ENCODE measurements at regions of chr9 and their contacts with region 1.

Region 1: DNA sequence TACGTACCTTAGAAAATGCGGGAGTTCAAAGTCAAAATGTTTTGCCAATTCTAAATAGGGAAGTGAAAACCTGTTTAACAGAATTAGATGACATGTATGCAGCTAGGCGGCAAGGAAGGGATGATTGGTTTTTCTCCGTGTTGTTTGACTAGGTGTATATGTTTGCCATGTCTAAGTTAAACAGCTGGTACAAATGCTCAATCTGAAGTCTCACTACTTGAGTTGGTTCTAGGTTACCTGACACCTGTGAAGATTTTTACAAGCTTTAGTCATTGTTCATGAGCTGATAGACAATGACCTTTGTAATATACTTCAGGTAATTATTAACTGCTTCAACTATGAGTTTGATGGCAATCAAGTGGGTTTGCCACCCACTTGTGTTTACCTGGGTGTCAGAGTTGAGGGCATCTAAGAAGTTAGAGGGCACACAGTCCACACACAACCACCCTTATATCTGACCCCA is 74.3 kb downstream of the SLC44A1 start:
- DNase-seq: peak; percentile 38
- H3K4me3 ChIP-seq: peak overlapping the region in 1 of 4 donors; percentile 5
- H3K27ac ChIP-seq: peak overlapping the region; percentile 83 to 87 (median 86)
- H3K4me1 ChIP-seq: peaks cover 2 to 60% (median 18%) of the 10 kb centered on the region in 4 donors
- H3K27me3 ChIP-seq: no peaks in the 10 kb centered on the region
- CTCF ChIP-seq: no peak
- EP300 ChIP-seq: no peak
- POLR2A ChIP-seq: peak; percentile 10

Region 2: DNA sequence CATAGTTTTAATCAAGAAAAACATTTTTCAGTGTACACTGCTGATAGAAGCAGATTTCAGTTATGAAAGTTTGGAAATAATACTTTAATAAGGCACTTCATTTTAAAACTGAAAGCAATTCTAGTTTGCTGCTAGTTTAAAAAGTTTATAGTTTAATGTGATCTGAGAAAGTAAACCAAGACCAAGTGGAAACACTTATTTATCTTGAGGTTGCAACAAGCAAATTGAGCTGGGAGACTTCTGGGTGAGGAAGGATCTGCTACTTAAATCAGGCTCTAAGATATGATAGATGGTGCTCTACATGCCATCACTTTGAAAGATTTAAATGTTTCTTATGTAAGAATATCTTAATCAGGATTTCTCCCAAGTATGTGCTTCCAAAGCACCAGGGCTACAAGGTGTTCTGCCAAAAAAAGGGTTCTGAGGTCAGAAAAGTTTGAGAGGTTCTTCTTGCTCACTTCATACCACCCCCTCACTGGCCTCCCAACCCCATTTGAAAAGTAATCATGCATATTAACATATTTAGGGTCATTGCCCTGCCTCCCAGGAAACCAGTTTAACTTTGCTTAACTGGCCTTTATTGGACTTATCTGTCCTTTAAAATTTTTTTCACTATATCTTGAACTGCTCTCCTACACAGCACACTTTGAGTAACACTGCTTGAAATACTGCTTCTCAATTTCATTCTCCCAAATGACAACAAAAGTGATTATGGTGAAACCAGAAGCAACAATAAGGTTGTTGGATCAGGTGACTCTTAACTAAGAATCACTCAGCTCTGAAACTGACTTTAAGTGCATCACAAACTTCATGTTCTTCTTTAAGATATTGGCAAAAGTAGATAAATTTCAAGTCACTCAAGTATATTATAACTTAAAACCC is 58.8 kb before region 1 on chr9:
- in situ Hi-C with region 1: loop called in 1 of 4 experiments (anchors 5 kb)
- intact Hi-C with region 1: no loop called
- DNase-seq: no peak
- H3K4me3 ChIP-seq: no peak overlapping the region
- H3K27ac ChIP-seq: peak overlapping the region; percentile 67 to 84 (median 75)
- H3K4me1 ChIP-seq: peaks cover 19 to 76% (median 55%) of the 10 kb centered on the region in 4 donors
- H3K27me3 ChIP-seq: no peaks in the 10 kb centered on the region
- CTCF ChIP-seq: no peak
- EP300 ChIP-seq: no peak
- POLR2A ChIP-seq: no peak

Region 3: DNA sequence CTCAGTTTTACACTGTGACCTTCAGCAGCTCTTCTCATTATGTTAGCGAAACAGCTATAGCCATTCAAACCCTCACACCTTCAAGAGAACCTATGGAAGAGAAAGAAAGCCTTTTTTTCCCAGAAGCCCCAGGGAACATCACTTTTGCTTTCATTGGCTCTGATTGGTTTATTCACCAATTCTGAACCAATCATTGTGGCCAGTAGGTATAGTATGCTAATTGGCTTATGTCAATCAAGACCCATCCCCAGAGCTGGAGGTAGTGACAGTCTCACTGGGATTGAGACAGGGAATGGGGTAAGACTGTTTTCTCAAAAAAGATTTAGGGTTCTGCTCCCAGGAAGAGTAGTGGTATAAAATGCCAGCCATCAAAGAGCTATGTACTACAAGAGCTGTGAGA is 55.0 kb after region 1 on chr9:
- in situ Hi-C with region 1: no loop called
- intact Hi-C with region 1: no loop called
- DNase-seq: no peak
- H3K4me3 ChIP-seq: no peak overlapping the region
- H3K27ac ChIP-seq: no peak overlapping the region
- H3K4me1 ChIP-seq: no peaks in the 10 kb centered on the region
- H3K27me3 ChIP-seq: no peaks in the 10 kb centered on the region
- CTCF ChIP-seq: no peak
- EP300 ChIP-seq: no peak
- POLR2A ChIP-seq: no peak

Measured in transverse colon (tissue), 4 donors.